A673 (cell line): ENCODE measurements at regions of chr5 and their contacts with region 1.

Region 1: DNA sequence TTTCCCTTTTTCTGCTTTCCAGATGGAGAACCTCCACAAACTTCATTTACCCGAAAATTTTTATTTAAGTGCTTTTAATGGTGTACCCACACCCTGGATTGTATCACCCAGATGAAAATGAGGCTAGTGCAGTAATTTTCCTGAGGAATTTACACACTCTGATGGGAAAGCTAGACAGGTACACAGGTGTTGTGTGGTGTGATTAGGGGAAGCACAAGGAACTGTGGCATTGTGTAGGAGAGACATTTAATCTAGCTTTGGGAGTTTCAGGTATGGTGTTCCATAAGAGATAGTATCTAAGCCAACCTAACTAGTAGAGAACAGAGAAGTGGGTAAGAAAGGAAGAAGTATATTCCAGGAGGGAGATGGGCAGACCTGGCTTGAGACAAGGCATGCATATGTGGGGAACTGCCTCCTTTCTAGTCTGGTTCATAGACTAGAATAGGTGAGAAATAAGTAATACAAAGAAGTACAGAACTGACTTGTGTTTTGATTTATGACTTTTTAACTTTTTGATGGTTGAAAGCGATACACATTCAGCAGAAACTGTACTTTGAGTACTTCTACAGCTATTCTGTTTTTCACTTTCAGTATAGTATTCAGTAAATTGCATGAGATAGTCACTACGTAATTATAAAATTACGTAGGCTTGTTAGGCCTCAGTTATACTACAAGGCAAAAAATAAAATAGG is 22.9 kb upstream of the ROPN1L start:
- DNase-seq: no peak
- H3K4me3 ChIP-seq: no peak overlapping the region
- H3K27ac ChIP-seq: no peak overlapping the region
- H3K4me1 ChIP-seq: no peaks in the 10 kb centered on the region
- H3K27me3 ChIP-seq: no peaks in the 10 kb centered on the region
- CTCF ChIP-seq: no peak

Region 2: DNA sequence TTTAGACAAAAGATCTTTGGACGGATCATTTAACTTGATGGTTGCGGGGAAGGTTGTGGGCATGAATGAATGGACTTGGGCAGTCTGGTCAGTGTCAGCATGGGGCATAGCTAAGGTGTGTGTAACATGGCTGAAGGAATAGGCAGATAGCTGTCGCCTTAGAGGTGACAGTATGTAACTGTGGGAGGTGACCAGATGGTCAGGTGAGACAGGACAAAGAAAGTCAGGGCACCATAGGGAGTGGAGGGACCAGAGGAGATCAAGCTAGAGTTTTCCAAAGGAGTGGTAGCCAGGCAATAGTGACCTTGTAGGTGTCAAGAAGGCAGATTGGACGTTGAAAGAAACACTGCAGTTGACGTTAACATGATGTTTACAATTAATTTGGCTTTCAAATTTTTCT is 22.2 kb before region 1 on chr5:
- CTCF ChIA-PET with region 1: no interaction called
- POLR2A ChIA-PET with region 1: interaction called, 11 read pairs
- intact Hi-C with region 1: no loop called
- DNase-seq: no peak
- H3K4me3 ChIP-seq: no peak overlapping the region
- H3K27ac ChIP-seq: no peak overlapping the region
- H3K4me1 ChIP-seq: no peaks in the 10 kb centered on the region
- H3K27me3 ChIP-seq: no peaks in the 10 kb centered on the region
- CTCF ChIP-seq: no peak